Dendritic cell treated with granulocyte-macrophage colony-stimulating factor and Interleukin-4, amounts not matched to agents 40 ng/mL and 50 ng/mL, for 4 days (primary cell): ENCODE measurements at regions of chr1 and their contacts with region 1.

Region 1: GRCh38 chr1:8026153-8026975 is at the start of gene ERRFI1:
- H3K4me3 Mint-ChIP-seq: peak within 1 kb of the TSS; percentile 78
- H3K27ac Mint-ChIP-seq: peak within 1 kb of the TSS; percentile 81
- H3K4me1 Mint-ChIP-seq: peaks cover 16% of the 10 kb centered on the region
- H3K27me3 Mint-ChIP-seq: peaks cover 63% of the 10 kb centered on the region

Region 2: GRCh38 chr1:7893529-7894180 is 132.7 kb before region 1 on chr1:
- intact Hi-C with region 1: no loop called
- H3K4me3 Mint-ChIP-seq: no peak overlapping the region
- H3K27ac Mint-ChIP-seq: no peak overlapping the region
- H3K4me1 Mint-ChIP-seq: no peaks in the 10 kb centered on the region
- H3K27me3 Mint-ChIP-seq: peaks cover 6% of the 10 kb centered on the region

Region 3: GRCh38 chr1:8061210-8061609 is 34.8 kb after region 1 on chr1:
- intact Hi-C with region 1: no loop called
- H3K4me3 Mint-ChIP-seq: no peak overlapping the region
- H3K27ac Mint-ChIP-seq: no peak overlapping the region
- H3K4me1 Mint-ChIP-seq: no peaks in the 10 kb centered on the region
- H3K27me3 Mint-ChIP-seq: peaks cover 12% of the 10 kb centered on the region

Region 4: DNA sequence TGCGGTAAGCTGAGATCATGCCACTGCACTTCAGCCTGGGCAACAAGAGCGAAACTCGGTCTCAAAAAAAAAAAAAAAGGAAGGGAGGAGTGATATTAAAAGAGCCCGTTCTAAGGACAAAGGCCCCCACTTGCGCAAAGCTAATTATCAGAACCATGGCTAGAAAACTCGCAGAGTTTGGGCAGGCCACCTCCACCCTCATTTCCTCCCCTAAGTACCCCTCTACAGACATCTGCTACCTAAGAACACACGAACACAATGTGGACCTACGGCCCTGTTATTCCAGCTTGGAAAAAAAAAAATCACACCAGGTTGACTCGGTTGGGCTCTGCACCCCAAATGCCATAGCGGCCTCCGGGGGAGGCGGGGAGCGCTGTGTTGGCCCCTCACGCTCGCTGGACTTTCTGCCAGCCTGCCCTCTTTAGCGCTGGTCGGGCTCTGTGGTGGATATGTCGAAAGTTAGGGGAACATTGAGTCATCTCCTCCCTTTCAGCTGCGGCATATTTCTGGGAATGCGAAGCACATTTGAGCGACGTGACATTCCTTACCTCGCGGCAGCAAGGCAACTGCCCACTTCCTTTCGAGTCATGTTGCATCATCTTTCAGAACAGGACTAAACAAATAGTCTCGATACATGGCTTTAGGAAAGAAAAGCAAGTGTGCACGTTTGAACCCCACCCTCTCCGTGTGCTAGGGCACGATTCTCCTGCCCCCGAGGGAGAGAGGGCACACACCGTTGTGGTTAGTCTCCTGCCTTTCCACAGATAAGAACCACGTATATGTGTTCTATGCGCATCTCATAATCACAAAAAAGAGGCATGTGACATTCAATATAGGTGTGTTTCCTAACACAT is 185.5 kb after region 1 on chr1:
- intact Hi-C with region 1: loop called (anchors 5 kb)
- H3K4me3 Mint-ChIP-seq: peak overlapping the region; percentile 74
- H3K27ac Mint-ChIP-seq: peak overlapping the region; percentile 85
- H3K4me1 Mint-ChIP-seq: peaks cover 46% of the 10 kb centered on the region
- H3K27me3 Mint-ChIP-seq: peaks cover 42% of the 10 kb centered on the region

Region 5: GRCh38 chr1:8317647-8318381 is 291.4 kb after region 1 on chr1 and contains the start of gene SLC45A1:
- intact Hi-C with region 1: loop called (anchors 1 kb)
- H3K4me3 Mint-ChIP-seq: peak within 1 kb of the TSS; percentile 75
- H3K27ac Mint-ChIP-seq: peak within 1 kb of the TSS; percentile 60
- H3K4me1 Mint-ChIP-seq: peaks cover 27% of the 10 kb centered on the region
- H3K27me3 Mint-ChIP-seq: peaks cover 81% of the 10 kb centered on the region

Region 6: GRCh38 chr1:8348777-8349491 is 322.6 kb after region 1 on chr1:
- intact Hi-C with region 1: loop called (anchors 1 kb)
- H3K4me3 Mint-ChIP-seq: no peak overlapping the region
- H3K27ac Mint-ChIP-seq: peak overlapping the region; percentile 11
- H3K4me1 Mint-ChIP-seq: peaks cover 5% of the 10 kb centered on the region
- H3K27me3 Mint-ChIP-seq: peaks cover 9% of the 10 kb centered on the region

Region 7: DNA sequence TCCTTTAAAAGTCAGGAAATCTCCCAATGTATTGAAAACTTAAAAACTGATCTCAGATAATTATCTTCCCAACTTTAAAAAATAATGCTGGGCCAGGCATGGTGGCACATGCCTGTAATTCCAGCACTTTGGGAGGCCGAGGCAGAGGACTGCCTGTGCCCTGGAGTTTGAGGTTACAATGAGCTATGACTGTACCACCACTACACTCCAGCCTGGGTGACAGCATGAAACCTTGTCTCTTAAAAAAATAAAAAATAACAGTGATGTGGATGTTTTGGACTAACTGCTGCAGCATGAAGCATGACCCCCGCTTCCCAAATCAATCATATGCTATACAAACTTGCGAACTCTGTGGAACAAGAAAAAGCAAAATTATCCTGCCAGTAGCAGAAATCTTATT is 604.8 kb after region 1 on chr1:
- intact Hi-C with region 1: no loop called
- H3K4me3 Mint-ChIP-seq: no peak overlapping the region
- H3K27ac Mint-ChIP-seq: peak overlapping the region; percentile 34
- H3K4me1 Mint-ChIP-seq: peaks cover 38% of the 10 kb centered on the region
- H3K27me3 Mint-ChIP-seq: no peaks in the 10 kb centered on the region